ENCODE measurements at regions of chr19 and their contacts with region 1.

Region 1: GRCh38 chr19:48835734-48836088 is 580 bp downstream of the HSD17B14 start:
- H3K4me3 ChIP-seq: no peak overlapping the region
- H3K27ac ChIP-seq: peak overlapping the region; percentile 37; the same call in 1 of the 2 replicates
- H3K4me1 ChIP-seq: no peaks in the 10 kb centered on the region; the same call in none of the 2 replicates
- CTCF ChIP-seq: peak; percentile 90

Region 2: DNA sequence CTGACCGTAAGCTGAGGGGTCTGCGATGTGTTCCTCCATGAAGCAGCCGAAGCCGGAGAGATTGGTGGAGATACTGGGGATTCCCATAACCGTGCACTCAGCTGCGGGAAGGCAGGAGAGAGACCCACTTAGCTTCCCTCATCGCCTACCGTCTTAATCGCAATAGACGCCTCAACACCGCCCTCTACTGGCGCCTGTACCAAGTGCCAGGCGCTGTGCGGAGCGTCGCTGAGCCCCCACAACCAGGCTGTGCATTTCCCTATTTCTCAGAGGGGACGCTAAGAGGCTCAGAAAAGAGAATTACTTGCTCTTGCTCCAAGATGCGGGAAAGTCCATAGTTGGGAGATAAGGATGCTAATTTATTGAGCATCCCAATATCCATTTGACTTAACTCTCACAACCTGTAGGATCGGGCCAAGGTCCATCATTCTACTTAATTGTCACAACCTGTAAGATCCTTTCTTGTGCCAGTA is 135.2 kb after region 1 on chr19:
- CTCF ChIA-PET with region 1: interaction called, 18 read pairs
- POLR2A ChIA-PET with region 1: no interaction called
- H3K4me3 ChIP-seq: no peak overlapping the region
- H3K27ac ChIP-seq: no peak overlapping the region
- H3K4me1 ChIP-seq: 0 out of 2 replicates have a peak, but pooled peaks cover 4% of the 10 kb centered on the region
- CTCF ChIP-seq: peak; percentile 91